Naive thymus-derived CD8-positive, alpha-beta T cell (primary cell): ENCODE measurements at regions of chr16 and their contacts with region 1.

Region 1: DNA sequence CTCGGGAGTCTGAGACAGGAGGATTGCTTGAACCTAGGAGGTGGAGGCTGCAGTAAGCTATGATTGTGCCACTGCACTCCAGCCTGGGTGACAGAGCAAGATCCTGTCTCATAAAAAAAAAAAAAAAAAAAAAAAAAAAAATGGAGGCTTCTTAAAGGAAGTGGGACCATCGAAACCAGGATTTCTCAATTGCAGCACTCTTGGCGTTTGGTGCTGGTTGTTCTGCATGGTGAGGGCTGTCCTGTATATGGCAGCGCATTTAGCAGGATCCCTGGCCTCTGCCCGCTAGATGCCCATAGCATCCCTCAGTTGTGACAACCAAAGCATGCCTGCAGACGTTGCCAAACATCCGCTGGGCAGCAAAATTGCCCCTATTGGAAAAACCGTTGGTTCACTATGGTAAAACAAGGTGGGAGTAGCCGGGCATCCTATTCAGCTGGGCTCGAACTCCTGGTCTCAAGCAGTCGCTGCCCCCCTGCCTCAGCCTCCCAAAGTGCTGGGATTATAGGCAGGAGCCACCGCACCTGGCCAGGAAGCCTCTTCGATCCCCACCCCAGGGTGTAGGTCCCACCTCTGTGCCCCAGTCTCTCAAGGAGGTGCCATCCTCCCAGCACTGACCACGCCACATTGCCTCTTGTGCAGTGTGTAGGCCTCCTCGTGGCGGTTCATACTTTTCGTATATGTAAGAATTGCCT is 6.5 kb upstream of the NPIPB7 start:
- DNase-seq: peak in 1 of 10 donors; percentile 44
- ATAC-seq: no peak
- H3K4me3 Mint-ChIP-seq: no peak overlapping the region
- H3K27ac Mint-ChIP-seq: peak overlapping the region in 3 of 10 donors; percentile 22 to 68 (median 24)
- H3K4me1 Mint-ChIP-seq: peaks cover 0 to 4% (median 3%) of the 10 kb centered on the region in 4 donors
- H3K27me3 Mint-ChIP-seq: no peaks in the 10 kb centered on the region

Region 2: GRCh38 chr16:28513484-28514181 is 35.0 kb after region 1 on chr16:
- POLR2A ChIA-PET with region 1: interaction called, 11 read pairs
- DNase-seq: no peak
- ATAC-seq: no peak
- H3K4me3 Mint-ChIP-seq: no peak overlapping the region
- H3K27ac Mint-ChIP-seq: peak overlapping the region in 5 of 10 donors; percentile 7 to 83 (median 33)
- H3K4me1 Mint-ChIP-seq: peaks cover 0 to 6% (median 4%) of the 10 kb centered on the region in 4 donors
- H3K27me3 Mint-ChIP-seq: no peaks in the 10 kb centered on the region

Region 3: DNA sequence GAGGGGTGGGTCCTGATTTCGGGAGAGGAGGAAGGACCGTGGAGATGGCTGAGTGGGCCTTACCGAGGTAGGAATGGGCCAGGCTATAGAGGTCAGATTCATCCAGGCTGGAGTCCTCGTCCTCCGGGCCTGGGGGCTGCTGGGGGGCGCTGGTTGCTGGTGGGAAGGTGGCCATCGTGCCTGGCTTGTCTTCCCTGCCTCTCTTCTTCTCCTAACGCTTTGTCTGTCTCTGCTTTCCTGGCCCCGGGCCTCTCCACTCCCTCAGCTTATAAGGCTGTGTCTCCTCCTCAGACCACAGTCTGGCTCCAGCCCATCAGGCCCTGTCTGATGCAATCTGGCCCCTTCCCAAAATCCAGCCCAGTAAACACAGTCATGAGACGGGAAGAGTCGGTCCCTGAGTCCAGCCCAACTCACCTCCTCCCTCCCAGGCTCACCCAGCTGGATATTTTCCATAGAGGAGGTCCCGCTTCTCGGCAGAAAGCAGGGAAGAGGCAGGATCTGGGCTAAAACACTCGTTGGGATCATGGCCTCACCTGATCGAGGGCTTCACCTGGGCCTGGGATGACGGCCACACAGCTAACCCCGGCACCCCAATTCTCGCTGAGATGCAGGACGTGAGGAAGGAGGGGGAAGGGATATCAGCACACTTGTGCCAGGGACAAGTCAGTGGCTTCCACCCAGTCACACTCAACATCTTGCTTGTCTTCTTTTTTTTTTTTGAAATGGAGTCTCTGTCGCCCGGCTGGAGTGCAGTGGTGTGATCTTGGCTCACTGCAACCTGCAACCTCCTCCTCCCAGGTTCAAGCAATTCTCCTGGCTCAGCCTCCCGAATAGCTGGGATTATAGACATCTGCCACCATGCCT is 60.3 kb after region 1 on chr16 and contains the start of gene NUPR1:
- POLR2A ChIA-PET with region 1: no interaction called
- DNase-seq: no peak
- ATAC-seq: no peak
- H3K4me3 Mint-ChIP-seq: peak within 1 kb of the TSS in 1 of 10 donors; percentile 19
- H3K27ac Mint-ChIP-seq: peak within 1 kb of the TSS; percentile 11 to 88 (median 74)
- H3K4me1 Mint-ChIP-seq: peaks cover 23 to 41% (median 28%) of the 10 kb centered on the region in 4 donors
- H3K27me3 Mint-ChIP-seq: no peaks in the 10 kb centered on the region
- polyA plus RNA-seq, gene NUPR1: not detected